ENCODE measurements at regions of chr2 and their contacts with region 1.

Region 1: DNA sequence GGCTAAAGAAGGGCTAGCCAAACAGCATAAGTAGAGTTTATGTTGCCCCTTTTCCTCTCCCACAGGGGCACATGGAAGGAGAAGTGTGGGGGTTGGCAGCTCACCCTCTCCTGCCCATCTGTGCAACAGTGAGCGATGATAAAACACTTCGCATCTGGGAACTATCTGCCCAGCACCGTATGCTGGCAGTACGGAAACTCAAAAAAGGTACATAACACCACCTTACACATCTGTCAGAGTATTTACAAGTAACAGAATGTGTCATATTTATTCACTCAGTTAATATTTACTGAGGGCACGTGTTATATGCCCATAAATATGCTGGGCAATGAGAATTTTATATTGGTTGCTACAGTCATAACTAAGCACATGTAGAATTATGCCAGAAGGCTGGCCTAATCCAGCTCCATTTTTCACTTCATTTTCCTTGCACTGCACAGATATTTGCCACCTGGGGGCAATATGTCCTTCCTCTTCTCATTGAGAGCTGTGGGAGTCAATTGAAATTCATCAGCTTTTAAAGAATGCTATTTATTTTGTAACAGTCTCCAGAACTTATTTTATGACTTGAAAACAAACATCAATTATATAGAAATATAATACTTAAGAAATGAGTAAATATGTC is 150.6 kb downstream of the RTN4 start:
- DNase-seq: peak in 2 of 9 experiments; percentile 39 to 51
- ATAC-seq: no peak
- H3K4me3 ChIP-seq: no peak overlapping the region
- H3K4me3 Mint-ChIP-seq: no peak overlapping the region
- H3K27ac ChIP-seq: no peak overlapping the region
- H3K27ac Mint-ChIP-seq: no peak overlapping the region
- H3K4me1 ChIP-seq: peaks cover 11% of the 10 kb centered on the region
- H3K4me1 Mint-ChIP-seq: peaks cover 14% of the 10 kb centered on the region
- H3K27me3 ChIP-seq: no peaks in the 10 kb centered on the region
- H3K27me3 Mint-ChIP-seq: no peaks in the 10 kb centered on the region
- CTCF ChIP-seq: peak; percentile 25

Region 2: DNA sequence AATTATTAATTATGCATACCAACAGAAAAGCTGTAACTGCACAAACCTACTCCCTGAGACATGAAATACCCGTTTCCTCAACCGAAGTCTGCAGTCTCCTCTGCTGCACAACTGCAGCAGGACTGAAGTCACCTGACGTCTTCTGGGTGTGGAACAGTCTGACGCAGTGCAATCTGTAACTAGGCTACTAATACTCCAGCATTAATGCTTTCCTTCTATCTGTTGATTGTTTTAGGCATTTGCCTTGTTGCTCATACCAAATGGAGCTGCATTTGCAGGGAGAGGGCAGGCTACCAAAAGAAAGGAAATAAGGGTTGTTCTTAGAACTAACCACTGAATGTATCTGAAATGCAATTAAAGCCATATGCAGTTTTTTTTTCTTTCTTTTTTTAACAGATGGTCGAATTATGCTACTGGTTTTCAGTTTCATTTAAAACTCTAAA is 110.5 kb after region 1 on chr2:
- CTCF ChIA-PET with region 1: interaction called, 4 read pairs
- POLR2A ChIA-PET with region 1: no interaction called
- intact Hi-C with region 1: loop called in 1 of 2 experiments (anchors 5 kb)
- DNase-seq: peak; percentile 7 to 79 (median 54)
- ATAC-seq: peak; percentile 95
- H3K4me3 ChIP-seq: peak overlapping the region; percentile 24 to 43
- H3K4me3 Mint-ChIP-seq: peak overlapping the region; percentile 93
- H3K27ac ChIP-seq: peak overlapping the region; percentile 40 to 45
- H3K27ac Mint-ChIP-seq: peak overlapping the region; percentile 95
- H3K4me1 ChIP-seq: peaks cover 61% of the 10 kb centered on the region
- H3K4me1 Mint-ChIP-seq: peaks cover 77% of the 10 kb centered on the region
- H3K27me3 ChIP-seq: no peaks in the 10 kb centered on the region
- H3K27me3 Mint-ChIP-seq: no peaks in the 10 kb centered on the region
- CTCF ChIP-seq: no peak

Region 3: DNA sequence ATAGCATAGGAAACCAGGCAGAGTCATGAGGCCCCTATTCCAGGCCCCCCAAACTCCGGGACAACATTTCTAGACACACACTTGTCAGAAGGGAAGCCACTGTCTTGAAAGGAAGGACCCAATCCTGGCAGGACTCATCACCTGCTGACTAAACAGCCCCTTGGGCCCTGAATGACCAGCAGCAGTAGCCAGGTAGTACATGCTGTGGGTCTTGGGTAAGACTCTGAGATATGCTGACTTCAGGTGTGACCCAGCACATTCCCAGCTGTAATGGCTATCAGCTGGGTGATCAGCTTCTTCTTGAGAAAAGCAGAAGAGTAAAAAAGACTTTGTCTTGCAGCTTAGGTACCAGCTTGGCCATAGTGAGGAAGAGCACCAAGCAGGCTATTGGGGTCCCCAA is 296.8 kb after region 1 on chr2:
- CTCF ChIA-PET with region 1: no interaction called
- POLR2A ChIA-PET with region 1: no interaction called
- intact Hi-C with region 1: no loop called
- DNase-seq: no peak
- ATAC-seq: no peak
- H3K4me3 ChIP-seq: no peak overlapping the region
- H3K4me3 Mint-ChIP-seq: no peak overlapping the region
- H3K27ac ChIP-seq: no peak overlapping the region
- H3K27ac Mint-ChIP-seq: no peak overlapping the region
- H3K4me1 ChIP-seq: no peaks in the 10 kb centered on the region
- H3K4me1 Mint-ChIP-seq: no peaks in the 10 kb centered on the region
- H3K27me3 ChIP-seq: peaks cover 0 to 2% of the 10 kb centered on the region in 2 experiments
- H3K27me3 Mint-ChIP-seq: no peaks in the 10 kb centered on the region
- CTCF ChIP-seq: no peak

Region 4: GRCh38 chr2:55431982-55432627 is 532.4 kb after region 1 on chr2:
- CTCF ChIA-PET with region 1: no interaction called
- POLR2A ChIA-PET with region 1: no interaction called
- intact Hi-C with region 1: loop called in 1 of 2 experiments (anchors 10 kb)
- DNase-seq: peak in 2 of 9 experiments; percentile 35 to 59
- ATAC-seq: peak; percentile 42
- H3K4me3 ChIP-seq: no peak overlapping the region
- H3K4me3 Mint-ChIP-seq: no peak overlapping the region
- H3K27ac ChIP-seq: no peak overlapping the region
- H3K27ac Mint-ChIP-seq: no peak overlapping the region
- H3K4me1 ChIP-seq: no peaks in the 10 kb centered on the region
- H3K4me1 Mint-ChIP-seq: no peaks in the 10 kb centered on the region
- H3K27me3 ChIP-seq: no peaks in the 10 kb centered on the region
- H3K27me3 Mint-ChIP-seq: no peaks in the 10 kb centered on the region
- CTCF ChIP-seq: peak; percentile 49